ENCODE measurements at regions of chr7 and their contacts with region 1.

Region 1: GRCh38 chr7:130084037-130084875 is 13.9 kb downstream of the KLHDC10 start:
- DNase-seq: no peak
- H3K4me3 ChIP-seq: no peak overlapping the region
- H3K27ac ChIP-seq: no peak overlapping the region
- H3K4me1 ChIP-seq: peaks cover 0 to 10% (median 4%) of the 10 kb centered on the region in 4 donors
- H3K27me3 ChIP-seq: no peaks in the 10 kb centered on the region
- CTCF ChIP-seq: peak; percentile 21 to 42 (median 32)
- EP300 ChIP-seq: no peak
- POLR2A ChIP-seq: no peak

Region 2: GRCh38 chr7:130114374-130115135 is 30.3 kb after region 1 on chr7:
- in situ Hi-C with region 1: no loop called
- intact Hi-C with region 1: loop called (anchors 1 kb)
- DNase-seq: no peak
- H3K4me3 ChIP-seq: no peak overlapping the region
- H3K27ac ChIP-seq: peak overlapping the region; percentile 48 to 67 (median 52)
- H3K4me1 ChIP-seq: peaks cover 9 to 34% (median 15%) of the 10 kb centered on the region in 4 donors
- H3K27me3 ChIP-seq: no peaks in the 10 kb centered on the region
- CTCF ChIP-seq: no peak
- EP300 ChIP-seq: no peak
- POLR2A ChIP-seq: no peak

Region 3: DNA sequence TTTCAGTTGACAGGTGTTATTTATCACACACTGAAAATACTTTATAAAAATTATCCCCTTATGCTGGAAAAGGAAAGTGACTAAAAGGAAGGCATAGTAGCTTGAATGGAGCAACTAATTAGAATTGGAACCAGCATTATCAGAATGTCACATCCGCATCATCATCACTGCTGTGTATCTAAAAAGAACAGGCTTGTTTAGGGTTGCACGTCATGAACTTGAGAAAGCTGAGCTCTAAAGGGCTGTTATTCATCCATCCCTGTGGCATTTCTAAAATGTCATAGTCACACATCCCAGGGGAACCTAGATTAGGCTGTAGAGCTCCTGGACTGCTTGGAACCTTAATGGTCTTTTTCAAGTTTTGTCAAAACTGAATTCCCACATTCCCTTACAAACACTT is 40.5 kb after region 1 on chr7:
- in situ Hi-C with region 1: no loop called
- intact Hi-C with region 1: no loop called
- DNase-seq: no peak
- H3K4me3 ChIP-seq: no peak overlapping the region
- H3K27ac ChIP-seq: no peak overlapping the region
- H3K4me1 ChIP-seq: peaks cover 6 to 19% (median 14%) of the 10 kb centered on the region in 4 donors
- H3K27me3 ChIP-seq: no peaks in the 10 kb centered on the region
- CTCF ChIP-seq: no peak
- EP300 ChIP-seq: no peak
- POLR2A ChIP-seq: no peak

Region 4: GRCh38 chr7:130758429-130759056 is 674.3 kb after region 1 on chr7:
- in situ Hi-C with region 1: loop called in 1 of 4 experiments (anchors 10 kb)
- intact Hi-C with region 1: loop called (anchors 10 kb)
- DNase-seq: no peak
- H3K4me3 ChIP-seq: no peak overlapping the region
- H3K27ac ChIP-seq: no peak overlapping the region
- H3K4me1 ChIP-seq: no peaks in the 10 kb centered on the region
- H3K27me3 ChIP-seq: no peaks in the 10 kb centered on the region
- CTCF ChIP-seq: peak; percentile 52 to 80 (median 71)
- EP300 ChIP-seq: no peak
- POLR2A ChIP-seq: no peak

Measured in transverse colon (tissue), 4 donors.